ENCODE measurements at regions of chr13 and their contacts with region 1.

Region 1: GRCh38 chr13:46721054-46721453 is 75.9 kb downstream of the ESD start:
- DNase-seq: peak; percentile 53 to 77
- H3K4me3 ChIP-seq: no peak overlapping the region
- H3K27ac ChIP-seq: no peak overlapping the region
- H3K4me1 ChIP-seq: peaks cover 0 to 22% (median 9%) of the 10 kb centered on the region in 4 donors
- H3K27me3 ChIP-seq: no peaks in the 10 kb centered on the region
- CTCF ChIP-seq: peak in 5 of 7 experiments; percentile 46 to 78 (median 58)
- EP300 ChIP-seq: no peak
- POLR2A ChIP-seq: no peak

Region 2: DNA sequence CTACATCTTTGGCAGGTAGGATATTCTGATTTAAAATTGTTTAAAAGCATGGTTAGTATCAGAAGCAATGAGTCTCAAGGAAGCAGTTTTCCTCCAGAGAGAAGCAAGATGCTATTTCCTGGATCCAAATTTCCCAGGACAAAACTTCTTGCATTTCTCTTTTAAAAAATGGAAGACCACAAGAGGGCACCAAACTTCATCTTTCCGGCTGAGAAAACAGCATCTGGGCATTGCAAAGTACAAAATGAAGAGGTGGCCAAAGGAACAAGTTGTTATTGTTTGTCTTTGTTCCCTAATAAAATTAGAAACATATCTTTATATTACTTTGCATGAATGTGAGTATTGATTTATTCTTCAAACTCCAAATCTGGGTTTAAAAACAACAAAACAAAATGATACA is 228.1 kb before region 1 on chr13:
- intact Hi-C with region 1: loop called (anchors 5 kb)
- DNase-seq: peak in 1 of 2 donors; percentile 80
- H3K4me3 ChIP-seq: no peak overlapping the region
- H3K27ac ChIP-seq: no peak overlapping the region
- H3K4me1 ChIP-seq: peaks cover 0 to 29% (median 10%) of the 10 kb centered on the region in 4 donors
- H3K27me3 ChIP-seq: no peaks in the 10 kb centered on the region
- CTCF ChIP-seq: peak in 4 of 7 experiments; percentile 35 to 64 (median 56)
- EP300 ChIP-seq: no peak
- POLR2A ChIP-seq: no peak

Region 3: DNA sequence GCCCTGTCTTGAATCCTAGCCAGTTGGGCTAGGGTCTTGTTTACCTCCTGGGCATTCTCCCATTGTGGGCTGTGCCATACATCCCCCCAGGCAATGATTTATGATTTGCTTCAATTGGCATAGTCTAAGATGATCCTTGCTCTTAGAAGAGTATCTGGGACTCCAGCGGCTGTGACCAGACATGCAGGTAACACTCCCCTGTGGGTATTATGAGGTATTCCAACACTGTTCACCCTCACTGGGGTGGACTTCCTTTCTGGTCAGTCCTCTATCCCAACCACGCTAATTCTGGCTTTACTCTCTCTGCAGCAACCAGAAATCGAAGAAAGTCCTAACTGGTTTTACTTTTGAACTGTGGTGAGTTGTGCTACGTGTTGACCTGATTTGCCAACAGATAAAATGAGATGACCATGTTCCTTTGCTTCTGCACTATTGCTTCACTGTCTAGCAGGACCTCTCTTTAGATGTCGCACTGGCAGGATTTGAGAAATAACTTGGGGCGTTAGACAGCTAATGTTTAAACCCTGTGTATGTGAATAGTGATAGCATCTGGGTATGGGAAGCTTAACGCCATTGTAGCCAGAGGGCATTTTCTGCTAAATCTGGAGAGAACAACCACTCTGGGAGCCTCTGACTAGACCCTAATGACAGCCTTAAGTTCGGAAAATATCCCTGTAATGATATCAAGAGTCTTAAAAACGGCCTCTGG is 174.8 kb before region 1 on chr13:
- intact Hi-C with region 1: loop called (anchors 5 kb)
- DNase-seq: no peak
- H3K4me3 ChIP-seq: no peak overlapping the region
- H3K27ac ChIP-seq: no peak overlapping the region
- H3K4me1 ChIP-seq: peaks cover 0 to 8% (median 2%) of the 10 kb centered on the region in 4 donors
- H3K27me3 ChIP-seq: no peaks in the 10 kb centered on the region
- CTCF ChIP-seq: no peak
- EP300 ChIP-seq: no peak
- POLR2A ChIP-seq: no peak

Measured in stomach (tissue), 19 donors.